Left cardiac atrium (tissue), 4 donors: ENCODE measurements at regions of chr20 and their contacts with region 1.

Region 1: DNA sequence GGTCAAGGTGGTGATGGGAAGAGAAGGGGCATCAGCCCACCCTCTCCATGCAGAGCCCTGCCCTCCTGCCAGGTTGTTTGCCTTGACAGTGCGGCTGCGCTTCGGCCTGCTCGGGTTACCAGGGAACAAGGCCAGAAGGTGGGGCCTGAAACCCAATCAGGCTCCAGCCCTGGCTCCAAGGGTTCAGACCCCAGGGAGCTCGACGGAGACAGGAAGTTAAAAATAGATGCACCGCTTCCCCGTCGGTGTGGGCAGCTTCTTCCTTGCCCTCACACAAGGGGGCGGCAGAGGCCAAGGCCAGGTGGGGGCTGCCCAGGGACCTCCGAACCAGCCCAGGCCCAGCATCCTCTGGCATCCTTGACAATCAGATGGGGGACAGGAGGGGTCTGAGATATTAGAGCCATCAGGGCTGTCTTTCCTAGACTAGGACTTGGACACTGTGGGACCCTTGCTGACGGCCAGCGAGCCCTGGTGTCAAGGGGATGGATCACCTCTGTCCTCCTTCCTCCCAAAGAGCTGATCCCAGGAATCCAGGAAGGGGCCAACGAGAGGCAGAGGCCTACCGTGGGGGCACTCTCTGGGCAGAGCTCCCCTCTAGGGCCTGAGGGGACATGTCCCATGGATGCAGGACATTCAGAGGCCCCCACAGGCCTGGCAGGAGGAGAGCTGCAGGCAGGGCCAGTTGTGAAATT is 65.2 kb downstream of the RIPOR3 start:
- DNase-seq: no peak
- ATAC-seq: peak; percentile 57 to 77

Region 2: DNA sequence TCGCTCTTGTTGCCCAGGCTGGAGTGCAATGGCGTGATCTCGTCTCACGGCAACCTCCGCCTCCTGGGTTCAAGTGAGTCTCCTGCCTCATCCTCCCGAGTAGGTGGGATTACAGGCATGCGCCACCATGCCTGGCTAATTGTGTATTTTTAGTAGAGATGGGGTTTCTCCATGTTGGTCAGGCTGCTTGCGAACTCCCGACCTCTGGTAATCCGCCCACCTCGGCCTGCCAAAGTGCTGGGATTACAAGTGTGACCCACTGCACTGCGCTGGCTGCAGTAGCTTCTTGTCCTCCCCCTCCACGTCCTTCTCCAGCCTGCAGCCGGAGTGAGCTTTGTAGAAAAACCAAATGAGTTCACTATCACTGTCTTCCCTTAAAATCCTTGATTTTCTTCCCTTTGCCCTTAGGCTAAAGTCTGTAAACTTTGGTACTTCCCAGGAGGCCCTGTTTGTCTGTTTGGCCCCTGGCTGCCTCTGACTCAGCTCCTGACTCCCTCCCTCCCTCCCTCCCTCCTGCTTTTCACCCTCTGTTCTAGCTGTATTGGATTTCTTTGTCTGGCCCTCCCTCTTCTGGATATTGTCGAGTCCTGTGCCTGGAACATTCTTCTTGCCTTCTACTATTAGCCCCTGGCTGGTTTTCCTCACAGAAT is 118.1 kb after region 1 on chr20:
- intact Hi-C with region 1: loop called (anchors 5 to 10 kb)
- DNase-seq: peak; percentile 38
- ATAC-seq: peak; percentile 93